Mammary epithelial cell (primary cell): ENCODE measurements at regions of chr6 and their contacts with region 1.

Region 1: DNA sequence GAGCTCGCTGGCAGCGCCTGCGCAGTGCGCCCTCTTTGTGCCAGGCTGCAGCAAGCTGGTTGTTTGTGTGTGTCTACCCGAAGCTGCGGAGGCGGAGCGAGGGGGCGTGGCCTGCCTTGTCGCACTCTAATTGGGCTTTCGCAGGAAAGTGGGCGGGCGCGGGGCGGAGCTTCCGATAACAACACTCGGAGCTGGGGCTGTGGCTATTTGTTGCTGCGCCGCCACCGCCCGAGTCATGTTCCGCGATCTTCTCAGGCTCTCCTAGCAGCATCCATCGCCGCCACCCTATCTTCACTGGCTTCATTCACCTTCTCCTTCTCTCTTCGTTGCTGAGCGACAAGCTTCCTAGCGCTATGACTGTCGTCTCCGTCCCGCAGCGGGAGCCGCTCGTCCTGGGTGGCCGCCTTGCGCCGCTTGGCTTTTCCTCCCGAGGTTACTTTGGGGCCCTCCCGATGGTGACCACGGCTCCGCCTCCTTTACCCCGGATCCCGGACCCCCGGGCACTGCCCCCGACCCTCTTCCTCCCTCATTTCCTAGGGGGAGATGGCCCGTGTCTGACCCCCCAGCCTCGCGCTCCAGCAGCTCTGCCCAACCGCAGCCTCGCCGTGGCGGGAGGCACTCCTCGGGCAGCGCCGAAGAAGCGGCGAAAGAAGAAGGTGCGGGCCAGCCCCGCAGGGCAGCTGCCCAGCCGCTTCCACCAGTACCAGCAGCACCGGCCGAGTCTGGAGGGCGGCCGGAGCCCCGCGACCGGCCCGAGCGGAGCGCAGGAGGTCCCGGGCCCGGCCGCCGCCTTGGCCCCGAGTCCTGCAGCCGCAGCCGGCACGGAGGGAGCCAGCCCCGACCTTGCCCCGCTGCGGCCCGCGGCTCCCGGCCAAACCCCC is at the start of gene PNRC1:
- DNase-seq: peak; percentile 98
- H3K4me3 ChIP-seq: peak within 1 kb of the TSS; percentile 73 to 78 (median 76)
- H3K27ac ChIP-seq: peak within 1 kb of the TSS; percentile 98
- H3K4me1 ChIP-seq: peaks cover 23% of the 10 kb centered on the region
- H3K27me3 ChIP-seq: no peaks in the 10 kb centered on the region
- CTCF ChIP-seq: no peak
- total RNA-seq, gene PNRC1: 56.6 to 75.0 TPM

Region 2: DNA sequence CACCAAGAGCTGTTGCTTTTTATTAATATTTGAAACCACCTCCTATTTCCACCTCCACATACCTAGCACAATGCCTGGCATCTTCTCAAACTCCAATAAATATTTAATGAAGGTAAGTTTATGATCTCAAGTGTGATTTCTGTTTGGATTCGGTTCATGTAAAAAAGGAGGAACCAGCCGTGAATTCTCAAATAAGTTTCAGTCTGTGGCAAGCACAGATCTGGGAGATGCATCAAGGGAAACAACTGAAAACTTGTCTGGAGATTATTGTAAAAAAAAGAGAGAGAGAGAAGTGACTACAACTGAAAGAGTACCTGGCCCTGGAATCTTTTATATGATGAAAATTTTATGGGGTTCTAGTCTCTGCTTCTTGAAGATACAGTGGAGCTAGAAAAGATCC is 53.0 kb before region 1 on chr6:
- CTCF ChIA-PET with region 1: interaction called, 12 read pairs
- dilution Hi-C with region 1: no loop called
- in situ Hi-C with region 1: no loop called
- intact Hi-C with region 1: no loop called
- DNase-seq: no peak
- H3K4me3 ChIP-seq: no peak overlapping the region
- H3K27ac ChIP-seq: no peak overlapping the region
- H3K4me1 ChIP-seq: peaks cover 15% of the 10 kb centered on the region
- H3K27me3 ChIP-seq: no peaks in the 10 kb centered on the region
- CTCF ChIP-seq: no peak

Region 3: DNA sequence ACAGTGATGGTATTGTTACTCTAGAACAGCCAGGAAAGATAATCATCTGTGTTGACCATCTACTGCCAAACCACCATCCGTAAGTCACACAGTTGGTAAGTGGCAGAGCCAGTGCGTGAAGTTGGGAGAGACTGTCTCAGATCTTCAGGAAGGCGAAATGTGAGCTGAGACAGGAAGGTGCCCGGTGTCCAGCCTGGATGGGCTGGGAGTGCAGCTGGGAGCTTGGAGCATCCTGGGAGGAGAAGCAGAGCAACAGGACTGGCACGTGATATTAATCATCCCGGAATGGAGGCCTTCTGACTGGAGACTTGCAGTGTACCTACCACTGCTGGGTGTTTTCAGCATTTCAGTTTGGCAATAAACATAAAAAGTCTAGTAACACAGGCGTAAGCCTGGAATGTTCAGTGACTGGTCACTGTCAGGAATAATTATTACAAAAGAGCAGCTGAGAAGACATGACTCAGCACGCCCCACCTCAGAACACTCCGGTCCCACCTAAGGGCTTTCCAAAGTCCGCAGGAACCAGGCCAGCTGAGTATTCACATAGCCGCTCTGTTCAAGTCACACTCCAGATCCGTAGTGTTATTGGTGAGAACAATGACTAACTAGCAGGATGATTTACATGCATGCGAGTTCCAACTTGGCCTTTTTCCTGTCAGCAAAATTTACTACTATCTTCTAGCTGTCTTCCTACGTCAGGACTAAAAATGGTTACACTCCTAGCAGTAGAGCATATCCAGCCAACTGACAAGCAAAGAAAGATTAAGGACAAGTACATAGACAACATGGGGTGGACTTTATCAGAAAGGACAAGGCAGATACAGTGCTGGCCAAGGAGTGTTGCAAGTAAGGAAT is 45.3 kb before region 1 on chr6:
- CTCF ChIA-PET with region 1: no interaction called
- dilution Hi-C with region 1: loop called (anchors 5 kb)
- in situ Hi-C with region 1: loop called in 1 of 2 experiments (anchors 5 kb)
- intact Hi-C with region 1: loop called (anchors 1 kb)
- DNase-seq: peak; percentile 100
- H3K4me3 ChIP-seq: peak overlapping the region; percentile 8 to 47 (median 37)
- H3K27ac ChIP-seq: peak overlapping the region; percentile 98
- H3K4me1 ChIP-seq: peaks cover 27% of the 10 kb centered on the region
- H3K27me3 ChIP-seq: no peaks in the 10 kb centered on the region
- CTCF ChIP-seq: no peak

Region 4: DNA sequence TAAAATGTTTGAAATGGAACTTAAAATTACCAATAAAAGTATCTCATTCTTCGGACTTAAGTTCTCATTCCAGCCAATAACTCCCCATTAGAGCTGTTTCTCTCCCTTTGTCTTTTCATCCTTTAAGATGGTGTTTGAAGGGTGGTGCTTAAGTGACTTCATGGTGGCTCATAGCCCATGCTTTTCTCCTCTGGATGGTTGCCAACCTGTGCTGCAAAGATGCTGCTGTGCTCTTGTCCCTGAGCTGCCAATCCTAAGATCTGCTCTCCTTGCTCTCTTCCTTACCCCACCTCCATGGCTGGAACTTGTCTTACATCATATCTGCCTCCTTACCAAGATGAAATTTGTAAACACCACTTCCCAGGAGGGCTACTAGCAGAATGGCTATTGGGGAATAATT is 31.8 kb before region 1 on chr6:
- CTCF ChIA-PET with region 1: no interaction called
- dilution Hi-C with region 1: no loop called
- in situ Hi-C with region 1: no loop called
- intact Hi-C with region 1: loop called (anchors 1 kb)
- DNase-seq: peak; percentile 35
- H3K4me3 ChIP-seq: no peak overlapping the region
- H3K27ac ChIP-seq: no peak overlapping the region
- H3K4me1 ChIP-seq: no peaks in the 10 kb centered on the region
- H3K27me3 ChIP-seq: no peaks in the 10 kb centered on the region
- CTCF ChIP-seq: no peak

Region 5: DNA sequence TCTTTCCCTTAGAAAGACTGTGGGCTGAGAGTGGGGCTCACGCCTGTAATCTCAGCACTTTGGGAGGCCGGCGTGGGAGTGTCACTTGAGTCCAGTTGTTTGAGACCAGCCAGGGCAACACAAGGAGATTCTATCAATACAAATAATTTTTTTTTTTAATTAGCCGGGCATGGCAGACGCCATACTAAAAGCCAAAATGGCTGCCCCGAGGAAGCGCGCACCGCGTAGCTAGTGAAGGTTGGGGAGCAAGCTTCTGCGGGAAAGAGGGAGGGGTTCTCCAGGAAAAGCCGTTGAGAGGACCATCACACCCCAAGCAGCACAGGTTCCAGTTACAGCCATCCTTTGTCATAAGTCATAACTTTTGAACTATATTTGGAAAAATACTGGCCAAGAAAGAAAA is 21.6 kb before region 1 on chr6:
- CTCF ChIA-PET with region 1: no interaction called
- dilution Hi-C with region 1: no loop called
- in situ Hi-C with region 1: no loop called
- intact Hi-C with region 1: no loop called
- DNase-seq: no peak
- H3K4me3 ChIP-seq: no peak overlapping the region
- H3K27ac ChIP-seq: no peak overlapping the region
- H3K4me1 ChIP-seq: no peaks in the 10 kb centered on the region
- H3K27me3 ChIP-seq: no peaks in the 10 kb centered on the region
- CTCF ChIP-seq: no peak